ENCODE measurements at regions of chr11 and their contacts with region 1.

Region 1: DNA sequence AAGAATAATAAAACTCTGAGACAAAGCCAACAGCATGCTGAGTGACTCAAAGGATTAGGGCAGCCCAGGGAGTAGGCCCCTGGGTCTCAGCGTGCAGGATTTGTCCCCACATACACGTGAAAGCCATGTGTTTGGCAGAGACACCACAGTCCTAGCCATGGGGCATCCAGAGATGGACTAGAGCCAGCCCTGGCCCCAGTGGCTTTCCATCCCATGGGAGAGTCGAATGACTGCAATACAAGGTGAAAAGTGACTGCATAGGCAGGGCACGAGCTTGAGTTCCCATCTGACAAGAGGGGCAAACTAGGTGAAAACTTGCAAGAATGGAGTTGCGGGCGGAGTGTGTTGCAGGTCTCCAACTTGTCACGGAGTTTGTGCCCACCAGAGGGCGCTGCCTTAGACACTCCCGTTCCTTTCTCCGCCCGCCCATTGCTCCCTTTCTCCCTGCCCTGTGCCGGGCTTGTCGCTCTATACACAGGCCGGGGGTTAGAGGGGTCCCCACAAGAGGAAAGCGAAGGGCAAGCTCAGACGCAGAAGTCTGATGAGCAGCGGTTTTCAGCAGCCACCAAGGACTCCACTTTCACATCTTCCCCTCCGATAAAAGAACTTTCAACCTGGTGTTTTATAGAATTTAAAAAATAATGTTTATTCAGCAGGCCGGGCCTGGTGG is 24.2 kb downstream of the TSKU start:
- DNase-seq: peak; percentile 91
- H3K4me3 ChIP-seq: peak overlapping the region in 2 of 4 donors; percentile 8 to 18
- H3K27ac ChIP-seq: no peak overlapping the region
- H3K4me1 ChIP-seq: peaks cover 0 to 5% (median 4%) of the 10 kb centered on the region in 4 donors
- H3K27me3 ChIP-seq: no peaks in the 10 kb centered on the region
- CTCF ChIP-seq: peak; percentile 61 to 77 (median 68)
- EP300 ChIP-seq: no peak
- POLR2A ChIP-seq: no peak

Region 2: GRCh38 chr11:76860539-76861475 is 53.5 kb after region 1 on chr11 and contains the start of gene ACER3:
- intact Hi-C with region 1: loop called (anchors 5 kb)
- DNase-seq: peak; percentile 94
- H3K4me3 ChIP-seq: peak within 1 kb of the TSS; percentile 55 to 85 (median 70)
- H3K27ac ChIP-seq: peak within 1 kb of the TSS; percentile 84 to 91 (median 86)
- H3K4me1 ChIP-seq: peaks cover 0 to 21% (median 12%) of the 10 kb centered on the region in 4 donors
- H3K27me3 ChIP-seq: no peaks in the 10 kb centered on the region
- CTCF ChIP-seq: peak in 2 of 4 experiments; percentile 21 to 23
- EP300 ChIP-seq: no peak
- POLR2A ChIP-seq: peak; percentile 54
- total RNA-seq, gene ACER3: 5.6 to 12.1 (median 10.4) TPM

Region 3: GRCh38 chr11:76919887-76920746 is 112.8 kb after region 1 on chr11:
- intact Hi-C with region 1: loop called (anchors 2 kb)
- DNase-seq: peak; percentile 89
- H3K4me3 ChIP-seq: no peak overlapping the region
- H3K27ac ChIP-seq: no peak overlapping the region
- H3K4me1 ChIP-seq: peaks cover 0 to 8% (median 3%) of the 10 kb centered on the region in 4 donors
- H3K27me3 ChIP-seq: no peaks in the 10 kb centered on the region
- CTCF ChIP-seq: peak; percentile 46 to 90 (median 78)
- EP300 ChIP-seq: no peak
- POLR2A ChIP-seq: no peak